ENCODE measurements at regions of chr11 and their contacts with region 1.

Region 1: GRCh38 chr11:8099291-8099899 is 18.4 kb downstream of the TUB start:
- DNase-seq: peak; percentile 42 to 66
- H3K4me3 ChIP-seq: no peak overlapping the region
- H3K27ac ChIP-seq: no peak overlapping the region
- H3K4me1 ChIP-seq: no peaks in the 10 kb centered on the region
- H3K27me3 ChIP-seq: no peaks in the 10 kb centered on the region
- CTCF ChIP-seq: peak; percentile 85

Region 2: GRCh38 chr11:7098235-7098832 is 1001.1 kb before region 1 on chr11:
- CTCF ChIA-PET with region 1: no interaction called
- POLR2A ChIA-PET with region 1: no interaction called
- intact Hi-C with region 1: loop called (anchors 2 kb)
- DNase-seq: no peak
- H3K4me3 ChIP-seq: no peak overlapping the region
- H3K27ac ChIP-seq: no peak overlapping the region
- H3K4me1 ChIP-seq: no peaks in the 10 kb centered on the region
- H3K27me3 ChIP-seq: no peaks in the 10 kb centered on the region
- CTCF ChIP-seq: peak; percentile 71

Region 3: GRCh38 chr11:8006349-8006977 is 92.9 kb before region 1 on chr11:
- CTCF ChIA-PET with region 1: interaction called, 22 read pairs
- POLR2A ChIA-PET with region 1: no interaction called
- intact Hi-C with region 1: loop called (anchors 1 kb)
- DNase-seq: peak; percentile 39 to 53
- H3K4me3 ChIP-seq: no peak overlapping the region
- H3K27ac ChIP-seq: no peak overlapping the region
- H3K4me1 ChIP-seq: no peaks in the 10 kb centered on the region
- H3K27me3 ChIP-seq: no peaks in the 10 kb centered on the region; the same call in 1 of the 2 replicates
- CTCF ChIP-seq: peak; percentile 72

Region 4: GRCh38 chr11:8219257-8220021 is 120.0 kb after region 1 on chr11:
- CTCF ChIA-PET with region 1: no interaction called
- POLR2A ChIA-PET with region 1: no interaction called
- intact Hi-C with region 1: no loop called
- DNase-seq: peak; percentile 40
- H3K4me3 ChIP-seq: no peak overlapping the region
- H3K27ac ChIP-seq: no peak overlapping the region
- H3K4me1 ChIP-seq: no peaks in the 10 kb centered on the region
- H3K27me3 ChIP-seq: no peaks in the 10 kb centered on the region
- CTCF ChIP-seq: peak; percentile 66

Region 5: GRCh38 chr11:8545698-8546366 is 446.4 kb after region 1 on chr11:
- CTCF ChIA-PET with region 1: no interaction called
- POLR2A ChIA-PET with region 1: no interaction called
- intact Hi-C with region 1: no loop called
- DNase-seq: no peak
- H3K4me3 ChIP-seq: no peak overlapping the region
- H3K27ac ChIP-seq: no peak overlapping the region
- H3K4me1 ChIP-seq: no peaks in the 10 kb centered on the region
- H3K27me3 ChIP-seq: no peaks in the 10 kb centered on the region
- CTCF ChIP-seq: no peak

Region 6: GRCh38 chr11:8832571-8833260 is 733.3 kb after region 1 on chr11:
- CTCF ChIA-PET with region 1: no interaction called
- POLR2A ChIA-PET with region 1: interaction called, 27 read pairs
- intact Hi-C with region 1: no loop called
- DNase-seq: peak; percentile 67 to 73
- H3K4me3 ChIP-seq: no peak overlapping the region
- H3K27ac ChIP-seq: peak overlapping the region; percentile 67
- H3K4me1 ChIP-seq: peaks cover 28% of the 10 kb centered on the region
- H3K27me3 ChIP-seq: no peaks in the 10 kb centered on the region
- CTCF ChIP-seq: no peak

Measured in PC-9 (cell line).